ENCODE measurements at regions of chr5 and their contacts with region 1.

Region 1: DNA sequence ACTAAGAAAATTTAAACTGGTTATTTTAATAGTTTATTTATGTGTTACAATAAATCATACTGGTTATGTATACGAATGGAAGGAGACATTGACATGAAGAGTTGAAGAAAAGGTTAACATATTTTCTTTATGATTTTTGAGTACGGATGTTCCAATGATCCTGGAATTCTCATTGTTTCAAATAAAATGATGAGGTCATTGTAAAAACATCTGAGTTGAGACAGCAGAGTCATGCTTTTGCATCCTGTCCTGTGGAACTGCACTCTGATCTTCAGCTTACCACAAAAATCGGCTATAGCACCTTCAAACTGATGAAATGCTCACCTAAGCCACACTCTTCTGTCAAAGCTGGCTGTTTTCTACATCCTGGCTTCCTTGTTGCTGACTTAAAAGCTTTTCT is 67.8 kb downstream of the PTCD2 start:
- DNase-seq: no peak
- ATAC-seq: peak in 4 of 8 donors; percentile 29 to 45 (median 40)
- H3K4me3 ChIP-seq: no peak overlapping the region
- H3K27ac ChIP-seq: peak overlapping the region in 5 of 10 donors; percentile 4 to 33 (median 20)
- H3K4me1 ChIP-seq: peaks cover 0 to 54% (median 39%) of the 10 kb centered on the region in 9 donors
- H3K27me3 ChIP-seq: no peaks in the 10 kb centered on the region
- CTCF ChIP-seq: no peak

Region 2: DNA sequence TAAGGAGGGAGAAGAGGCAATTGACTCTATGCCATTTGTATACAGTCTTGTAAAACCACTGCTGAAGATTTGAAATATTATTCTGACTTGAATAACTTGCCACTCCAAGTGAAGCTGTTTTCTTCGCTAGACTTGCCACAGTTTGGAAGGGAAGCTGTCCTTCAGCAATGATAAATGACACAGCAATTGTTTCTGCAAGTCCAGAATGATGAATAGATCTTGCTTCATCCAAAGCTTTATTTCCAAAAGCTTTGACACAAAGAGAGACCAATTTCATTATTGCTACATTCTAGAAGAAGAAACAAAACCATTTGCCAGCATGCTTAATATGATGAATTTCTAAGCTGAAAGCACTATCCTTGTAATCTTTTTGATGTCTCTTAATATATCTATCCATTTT is 45.5 kb after region 1 on chr5:
- intact Hi-C with region 1: loop called in 1 of 10 experiments (anchors 5 kb)
- DNase-seq: no peak
- ATAC-seq: no peak
- H3K4me3 ChIP-seq: no peak overlapping the region
- H3K27ac ChIP-seq: peak overlapping the region in 7 of 10 donors; percentile 24 to 83 (median 67)
- H3K4me1 ChIP-seq: peaks cover 0 to 45% (median 31%) of the 10 kb centered on the region in 9 donors
- H3K27me3 ChIP-seq: no peaks in the 10 kb centered on the region
- CTCF ChIP-seq: no peak

Region 3: GRCh38 chr5:72465601-72466563 is 77.9 kb after region 1 on chr5:
- intact Hi-C with region 1: no loop called
- DNase-seq: no peak
- ATAC-seq: peak in 1 of 8 donors; percentile 9
- H3K4me3 ChIP-seq: no peak overlapping the region
- H3K27ac ChIP-seq: peak overlapping the region in 8 of 10 donors; percentile 27 to 75 (median 49)
- H3K4me1 ChIP-seq: peaks cover 2 to 70% (median 52%) of the 10 kb centered on the region in 9 donors
- H3K27me3 ChIP-seq: no peaks in the 10 kb centered on the region
- CTCF ChIP-seq: no peak

Measured in heart right ventricle (tissue), 16 donors.